ENCODE measurements at regions of chr16 and their contacts with region 1.

Region 1: GRCh38 chr16:67883872-67884261 is 818 bp upstream of the NRN1L start:
- DNase-seq: peak; percentile 75
- ATAC-seq: peak; percentile 90
- H3K4me3 Mint-ChIP-seq: no peak overlapping the region
- H3K27ac Mint-ChIP-seq: no peak overlapping the region
- H3K4me1 Mint-ChIP-seq: no peaks in the 10 kb centered on the region
- H3K27me3 Mint-ChIP-seq: no peaks in the 10 kb centered on the region
- CTCF ChIP-seq: peak; percentile 63

Region 2: GRCh38 chr16:67928561-67929364 is 44.9 kb after region 1 on chr16:
- CTCF ChIA-PET with region 1: interaction called, 10 read pairs
- POLR2A ChIA-PET with region 1: interaction called, 4 read pairs
- intact Hi-C with region 1: loop called (anchors 1 kb)
- DNase-seq: peak; percentile 64
- ATAC-seq: peak; percentile 90
- H3K4me3 Mint-ChIP-seq: no peak overlapping the region
- H3K27ac Mint-ChIP-seq: no peak overlapping the region
- H3K4me1 Mint-ChIP-seq: peaks cover 36% of the 10 kb centered on the region
- H3K27me3 Mint-ChIP-seq: no peaks in the 10 kb centered on the region
- CTCF ChIP-seq: peak; percentile 43

Region 3: DNA sequence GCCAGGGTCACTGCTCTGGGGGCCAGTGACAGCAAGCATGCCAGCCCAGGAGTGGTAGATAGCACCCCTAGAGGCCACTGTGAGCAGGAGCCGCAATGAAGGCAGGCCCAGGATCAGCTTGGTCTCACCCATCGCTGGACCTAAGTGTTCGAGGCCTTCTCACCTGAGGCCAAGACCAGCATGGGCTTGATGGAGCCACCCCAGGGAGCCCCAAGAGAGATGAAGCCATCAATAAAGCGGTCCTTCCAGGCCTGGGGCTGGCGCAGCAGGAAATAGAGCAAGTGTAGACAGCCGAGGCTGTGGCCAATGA is 58.3 kb after region 1 on chr16:
- CTCF ChIA-PET with region 1: interaction called, 15 read pairs
- POLR2A ChIA-PET with region 1: no interaction called
- intact Hi-C with region 1: no loop called
- DNase-seq: no peak
- ATAC-seq: peak; percentile 81
- H3K4me3 Mint-ChIP-seq: no peak overlapping the region
- H3K27ac Mint-ChIP-seq: no peak overlapping the region
- H3K4me1 Mint-ChIP-seq: peaks cover 22% of the 10 kb centered on the region
- H3K27me3 Mint-ChIP-seq: no peaks in the 10 kb centered on the region
- CTCF ChIP-seq: no peak

Region 4: DNA sequence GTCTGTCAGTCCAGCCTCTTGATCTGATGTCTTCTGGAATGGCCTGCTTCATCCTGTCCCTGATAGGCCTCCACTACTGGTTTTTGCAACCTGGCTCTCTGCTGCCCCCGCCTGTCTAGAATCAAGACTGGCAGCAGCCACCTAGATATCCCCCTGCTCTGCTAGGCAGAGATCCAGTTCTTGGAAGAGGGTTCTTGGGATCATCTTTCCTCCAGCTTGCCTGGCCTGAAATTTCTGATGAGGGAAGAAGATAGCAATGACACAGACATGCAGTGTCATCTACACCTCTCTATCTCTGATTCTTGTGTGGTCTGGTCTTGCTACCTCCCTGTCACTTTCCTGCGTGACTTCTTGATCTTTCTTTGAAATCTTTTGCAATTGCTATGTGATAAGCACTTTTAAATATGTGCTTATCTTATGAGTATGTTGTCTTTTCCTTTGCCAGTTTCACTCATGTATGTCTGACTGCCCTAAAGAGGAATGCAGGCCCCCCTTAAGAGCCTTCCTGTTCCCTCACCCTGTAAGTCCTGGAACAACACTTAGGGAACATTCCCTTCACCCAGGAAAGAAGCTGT is 181.0 kb after region 1 on chr16:
- CTCF ChIA-PET with region 1: interaction called, 10 read pairs
- POLR2A ChIA-PET with region 1: no interaction called
- intact Hi-C with region 1: loop called (anchors 1 kb)
- DNase-seq: peak; percentile 52
- ATAC-seq: peak; percentile 93
- H3K4me3 Mint-ChIP-seq: no peak overlapping the region
- H3K27ac Mint-ChIP-seq: no peak overlapping the region
- H3K4me1 Mint-ChIP-seq: peaks cover 27% of the 10 kb centered on the region
- H3K27me3 Mint-ChIP-seq: no peaks in the 10 kb centered on the region
- CTCF ChIP-seq: no peak

Measured in activated B cell treated with CpG ODN at 0.5 μM for 24 hours (primary cell).